A549 (cell line): ENCODE measurements at regions of chr2 and their contacts with region 1.

Region 1: GRCh38 chr2:239630618-239631286 is 229.9 kb upstream of the HDAC4 start:
- DNase-seq: peak; percentile 74 to 87
- ATAC-seq: peak; percentile 99 to 100
- H3K4me3 ChIP-seq: no peak overlapping the region
- H3K27ac ChIP-seq: peak overlapping the region; percentile 77 to 87
- H3K4me1 ChIP-seq: peaks cover 20% of the 10 kb centered on the region
- CTCF ChIP-seq: no peak
- EP300 ChIP-seq: peak; percentile 47 to 73; a peak in 2 of 5 replicates
- POLR2A ChIP-seq: no peak
- RAD21 ChIP-seq: no peak; a peak in 1 of 5 replicates

Region 2: GRCh38 chr2:239401067-239401880 is 229.5 kb before region 1 on chr2:
- CTCF ChIA-PET with region 1: interaction called, 3 read pairs
- POLR2A ChIA-PET with region 1: interaction called, 10 read pairs
- DNase-seq: peak; percentile 95 to 98
- ATAC-seq: peak; percentile 94 to 99
- H3K4me3 ChIP-seq: peak overlapping the region; percentile 87
- H3K27ac ChIP-seq: peak overlapping the region; percentile 97 to 98
- H3K4me1 ChIP-seq: peaks cover 17% of the 10 kb centered on the region
- CTCF ChIP-seq: no peak
- EP300 ChIP-seq: no peak; a peak in 1 of 5 replicates
- POLR2A ChIP-seq: peak; percentile 96
- RAD21 ChIP-seq: no peak; a peak in 1 of 5 replicates

Region 3: GRCh38 chr2:239609162-239609561 is 21.6 kb before region 1 on chr2:
- CTCF ChIA-PET with region 1: interaction called, 3 read pairs
- POLR2A ChIA-PET with region 1: interaction called, 13 read pairs
- DNase-seq: no peak
- ATAC-seq: no peak
- H3K4me3 ChIP-seq: no peak overlapping the region
- H3K27ac ChIP-seq: no peak overlapping the region
- H3K4me1 ChIP-seq: no peaks in the 10 kb centered on the region
- CTCF ChIP-seq: no peak
- EP300 ChIP-seq: no peak
- POLR2A ChIP-seq: no peak
- RAD21 ChIP-seq: no peak